GM18951 (cell line): ENCODE measurements at regions of chr20 and their contacts with region 1.

Region 1: DNA sequence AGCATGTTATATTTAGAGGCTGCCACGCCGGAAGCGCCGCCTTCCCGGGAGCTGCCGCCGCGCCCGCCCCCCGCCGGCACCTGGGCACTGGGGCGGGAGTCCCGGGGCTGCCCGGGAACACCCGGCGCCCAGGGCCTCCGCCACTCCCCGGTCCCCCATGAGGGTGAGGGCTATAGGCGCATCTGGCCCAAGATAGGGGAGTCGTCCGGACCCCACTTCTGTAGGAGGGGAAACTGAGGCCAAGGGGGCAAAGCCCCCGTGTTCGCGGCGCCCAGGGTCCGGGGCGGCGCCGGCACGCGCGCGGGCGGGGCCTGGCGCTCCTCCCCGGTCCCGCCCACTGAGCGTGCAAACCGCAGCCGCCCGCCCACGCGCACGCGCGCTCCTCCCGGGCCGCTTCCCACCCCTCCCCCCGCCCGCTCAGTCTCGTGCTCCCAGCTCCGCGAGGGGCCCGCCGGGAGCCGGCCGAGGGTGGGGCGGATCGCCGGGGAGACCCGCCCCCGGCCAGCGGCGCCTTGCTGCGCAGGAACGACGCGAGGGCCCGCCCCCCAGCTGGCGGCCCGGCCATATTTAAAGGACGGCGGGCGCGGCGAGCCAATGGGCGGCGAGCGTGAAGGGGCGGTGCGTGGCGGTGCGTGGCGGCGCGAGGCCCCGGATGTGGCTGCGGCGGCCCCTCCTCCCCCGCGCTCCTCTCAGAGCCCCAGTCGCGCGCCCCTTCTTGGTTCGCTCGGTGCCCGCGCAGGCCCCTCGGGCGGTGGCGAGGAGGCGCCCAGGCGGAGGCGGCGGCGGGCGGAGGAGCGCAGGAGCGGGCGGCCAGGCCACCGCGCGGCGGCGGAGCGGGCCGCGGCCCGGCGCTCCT is at the start of gene LSM14B:
- POLR2A ChIP-seq: peak; percentile 64

Region 2: DNA sequence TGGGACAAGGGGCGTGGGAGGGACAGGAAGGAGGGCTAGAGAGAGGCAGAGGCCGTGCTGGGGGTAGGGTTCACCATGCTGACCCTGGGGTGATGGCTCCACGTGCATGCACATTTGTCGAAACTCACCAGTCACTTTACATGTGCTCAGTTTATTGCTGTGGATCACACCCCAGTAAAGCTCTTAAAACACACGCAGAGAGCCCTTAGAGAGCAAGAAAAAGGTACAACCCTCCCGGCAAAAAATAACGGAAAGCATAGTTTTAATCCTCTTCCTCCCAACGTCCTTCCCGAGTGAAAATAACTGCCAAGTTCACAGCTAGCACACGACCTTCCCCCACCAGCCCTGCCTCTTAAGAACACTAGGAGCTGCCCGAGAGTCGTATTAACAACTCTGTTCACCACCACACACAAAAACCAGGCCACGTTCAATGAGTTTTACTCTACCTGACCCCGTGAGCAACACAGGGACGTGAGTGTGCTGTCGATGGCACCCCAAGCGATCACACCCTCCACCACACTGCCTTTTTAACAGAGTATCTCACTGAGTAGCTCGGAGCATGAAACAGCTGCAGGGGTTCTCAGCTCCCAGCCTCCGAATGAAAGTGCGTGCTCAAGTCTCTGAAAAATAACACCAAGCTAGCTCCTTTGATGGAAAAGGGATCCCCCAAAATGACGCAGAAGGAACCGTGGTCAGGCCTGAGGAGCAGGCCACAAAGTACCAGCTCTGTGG is 96.0 kb before region 1 on chr20:
- in situ Hi-C with region 1: loop called (anchors 10 kb)
- POLR2A ChIP-seq: no peak